Left lung (tissue), 14 donors: ENCODE measurements at regions of chr9 and their contacts with region 1.

Region 1: DNA sequence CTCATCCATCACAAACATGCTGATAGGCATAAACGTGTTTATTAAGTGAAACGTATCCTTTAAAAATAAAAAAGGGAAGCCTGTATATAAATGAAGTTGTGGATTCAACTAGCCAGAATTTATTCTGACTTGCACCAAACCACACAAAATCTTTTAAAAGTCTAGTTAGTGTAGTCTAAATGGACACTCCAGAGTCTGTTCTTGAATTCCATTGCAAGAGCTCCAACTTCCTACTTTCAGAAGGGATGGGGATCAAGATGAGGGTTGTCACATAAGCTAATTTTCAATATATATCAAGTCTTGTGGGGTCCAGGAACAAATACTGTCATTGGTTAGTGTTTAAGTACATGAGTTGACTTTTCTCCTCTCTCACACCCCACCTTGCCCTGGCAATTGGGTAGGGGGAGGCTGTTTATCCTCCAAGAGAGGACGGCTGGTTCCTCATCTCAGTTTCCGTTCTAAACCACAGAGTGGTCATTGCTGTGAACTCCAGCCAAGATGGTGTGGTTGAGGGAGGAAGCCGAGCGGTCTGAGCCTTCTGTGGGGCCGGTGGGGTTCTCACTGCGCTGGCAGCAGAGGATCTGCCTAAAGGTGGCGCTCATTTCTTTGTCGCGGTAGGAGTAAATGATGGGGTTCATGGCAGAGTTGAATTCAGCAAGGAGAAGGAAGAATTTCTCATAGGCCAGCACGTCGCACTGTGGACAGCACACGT is 163.2 kb downstream of the LPAR1 start:
- DNase-seq: peak in 2 of 4 donors; percentile 62 to 71
- ATAC-seq: peak; percentile 84
- H3K4me3 ChIP-seq: no peak overlapping the region
- H3K27ac ChIP-seq: no peak overlapping the region
- H3K4me1 ChIP-seq: no peaks in the 10 kb centered on the region
- H3K27me3 ChIP-seq: no peaks in the 10 kb centered on the region
- CTCF ChIP-seq: peak in 1 of 2 donors; percentile 18

Region 2: GRCh38 chr9:110933350-110934001 is 58.4 kb after region 1 on chr9:
- intact Hi-C with region 1: loop called in 1 of 2 experiments (anchors 10 kb)
- DNase-seq: no peak
- ATAC-seq: no peak
- H3K4me3 ChIP-seq: no peak overlapping the region
- H3K27ac ChIP-seq: no peak overlapping the region
- H3K4me1 ChIP-seq: peaks cover 0 to 3% of the 10 kb centered on the region in 2 donors
- H3K27me3 ChIP-seq: no peaks in the 10 kb centered on the region
- CTCF ChIP-seq: no peak

Region 3: DNA sequence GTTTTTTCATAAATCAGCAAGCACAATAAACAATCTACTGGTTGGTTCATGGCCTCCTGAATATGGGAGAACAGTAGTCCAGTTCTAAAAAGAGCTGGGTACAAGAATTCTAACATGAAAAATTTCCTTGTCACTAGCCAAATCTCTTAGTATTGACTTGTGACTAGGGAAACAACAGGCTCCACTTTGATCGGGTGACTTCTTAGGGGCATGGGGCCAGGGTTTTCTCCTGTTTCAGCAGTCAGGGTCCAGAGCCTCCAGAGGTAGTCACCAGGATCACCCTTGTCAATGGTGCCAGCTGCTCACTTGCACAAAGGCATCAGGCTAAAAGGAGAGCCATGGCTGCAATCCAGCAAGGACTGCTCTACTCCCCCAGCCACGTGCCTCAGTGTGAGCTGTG is 125.1 kb after region 1 on chr9:
- intact Hi-C with region 1: no loop called
- DNase-seq: no peak
- ATAC-seq: no peak
- H3K4me3 ChIP-seq: no peak overlapping the region
- H3K27ac ChIP-seq: no peak overlapping the region
- H3K4me1 ChIP-seq: peaks cover 3 to 17% of the 10 kb centered on the region in 2 donors
- H3K27me3 ChIP-seq: no peaks in the 10 kb centered on the region
- CTCF ChIP-seq: no peak

Region 4: DNA sequence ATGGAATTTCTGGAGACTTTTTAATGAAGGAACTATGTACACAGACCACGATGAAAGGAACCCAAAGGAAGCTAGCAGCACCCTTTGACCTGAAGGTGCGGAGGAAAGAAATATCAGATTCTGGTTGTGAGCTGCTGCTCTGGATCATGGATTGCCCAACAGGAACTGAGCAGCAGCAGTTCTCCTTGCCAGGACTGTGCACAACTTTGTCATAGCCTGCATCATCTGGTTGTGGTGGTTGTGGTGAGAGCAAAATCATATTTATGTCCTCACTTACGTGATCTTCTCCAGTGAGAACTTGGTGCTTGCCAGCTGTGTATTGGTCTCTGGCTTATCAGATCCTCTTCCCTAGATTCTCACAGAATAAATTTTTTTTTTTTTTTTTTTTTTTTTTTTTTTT is 233.8 kb after region 1 on chr9:
- intact Hi-C with region 1: no loop called
- DNase-seq: peak in 1 of 4 donors; percentile 37
- ATAC-seq: peak; percentile 44
- H3K4me3 ChIP-seq: no peak overlapping the region
- H3K27ac ChIP-seq: no peak overlapping the region
- H3K4me1 ChIP-seq: peaks cover 0 to 9% of the 10 kb centered on the region in 2 donors
- H3K27me3 ChIP-seq: no peaks in the 10 kb centered on the region
- CTCF ChIP-seq: no peak